Naive thymus-derived CD8-positive, alpha-beta T cell (primary cell): ENCODE measurements at regions of chr17 and their contacts with region 1.

Region 1: DNA sequence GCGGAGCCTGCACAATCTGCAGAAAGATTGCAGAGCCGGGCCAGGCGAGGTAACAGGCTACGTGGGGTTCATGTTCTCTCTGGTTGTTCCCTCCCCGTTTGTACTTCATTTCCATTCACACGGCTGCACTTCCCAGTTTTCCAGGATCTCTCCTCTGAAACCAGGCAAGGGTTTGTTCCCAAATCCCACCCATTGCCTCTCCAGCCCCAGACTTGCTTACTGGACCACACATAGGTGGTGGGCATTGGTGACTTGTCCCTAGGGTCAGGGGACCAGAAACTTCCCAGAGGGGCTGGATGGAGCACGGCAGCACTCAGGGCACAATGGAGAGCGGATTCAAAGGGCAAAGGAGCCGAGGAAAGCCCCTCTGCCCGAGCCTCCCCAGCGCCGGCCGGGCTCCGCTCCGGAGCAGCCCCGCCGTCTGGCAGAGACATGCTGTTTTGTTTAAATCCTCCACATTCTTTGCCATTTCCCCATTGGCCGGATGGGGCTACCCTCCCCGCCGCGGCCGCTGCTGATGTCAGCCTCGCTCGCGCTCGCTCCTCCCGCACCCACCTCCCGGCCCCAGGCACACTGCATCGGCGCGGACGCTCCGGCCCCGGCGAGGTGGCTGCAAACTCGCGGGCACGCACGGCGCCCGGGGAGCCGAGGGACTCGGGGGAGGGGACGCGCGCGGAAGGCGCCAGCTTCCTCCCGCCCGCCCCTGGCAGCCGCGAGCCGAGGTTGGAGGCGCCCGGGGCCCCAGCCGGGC is at the start of gene PITPNC1:
- DNase-seq: peak; percentile 81 to 93 (median 86)
- ATAC-seq: peak; percentile 70 to 74
- H3K4me3 Mint-ChIP-seq: peak within 1 kb of the TSS; percentile 89 to 99 (median 94)
- H3K27ac Mint-ChIP-seq: peak within 1 kb of the TSS; percentile 45 to 97 (median 94)
- H3K4me1 Mint-ChIP-seq: peaks cover 24 to 47% (median 44%) of the 10 kb centered on the region in 4 donors
- H3K27me3 Mint-ChIP-seq: no peaks in the 10 kb centered on the region
- polyA plus RNA-seq, gene PITPNC1: 119 to 159 (median 125) TPM

Region 2: DNA sequence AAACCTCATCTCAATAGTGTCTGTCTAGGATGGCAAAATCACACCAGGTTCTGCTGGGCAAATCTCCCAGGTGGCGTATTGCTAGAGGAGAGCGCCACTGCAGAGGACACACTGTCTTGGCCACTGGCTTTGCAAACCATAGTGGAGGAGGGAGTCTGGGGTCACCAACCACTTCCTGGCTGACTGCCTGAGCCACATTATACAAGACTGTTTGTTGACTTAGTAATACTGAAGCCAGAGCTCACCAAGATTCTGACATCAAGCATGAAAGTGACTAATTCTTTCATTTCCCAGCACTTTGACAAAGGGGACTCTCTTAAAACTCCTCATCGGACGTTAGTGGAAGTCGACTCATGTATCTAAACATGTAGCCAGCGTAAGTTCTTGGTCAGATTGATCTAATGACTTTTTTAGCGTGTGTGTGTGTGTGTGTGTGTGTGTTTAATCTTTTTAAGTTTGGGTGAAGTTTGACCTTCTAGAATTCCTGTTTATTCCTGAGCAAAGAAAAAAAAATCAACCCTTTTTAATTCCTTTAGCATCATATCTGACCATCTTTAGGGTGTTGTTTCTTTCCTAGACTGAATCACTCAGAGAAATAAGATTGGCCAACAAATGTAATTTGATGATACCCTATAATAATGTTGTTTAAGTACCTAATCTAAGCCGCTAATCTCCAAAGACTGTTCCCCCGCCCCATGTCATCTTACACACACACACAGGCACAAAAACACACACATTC is 13.9 kb after region 1 on chr17:
- POLR2A ChIA-PET with region 1: interaction called, 61 read pairs
- DNase-seq: peak; percentile 32 to 76 (median 54)
- ATAC-seq: peak; percentile 80 to 83
- H3K4me3 Mint-ChIP-seq: peak overlapping the region; percentile 59 to 88 (median 80)
- H3K27ac Mint-ChIP-seq: peak overlapping the region; percentile 90 to 98 (median 94)
- H3K4me1 Mint-ChIP-seq: peaks cover 30 to 90% (median 77%) of the 10 kb centered on the region in 4 donors
- H3K27me3 Mint-ChIP-seq: no peaks in the 10 kb centered on the region

Region 3: GRCh38 chr17:67421869-67422273 is 45.0 kb after region 1 on chr17:
- POLR2A ChIA-PET with region 1: interaction called, 23 read pairs
- DNase-seq: peak in 9 of 10 donors; percentile 52 to 85 (median 71)
- ATAC-seq: peak; percentile 91 to 98
- H3K4me3 Mint-ChIP-seq: peak overlapping the region; percentile 43 to 76 (median 64)
- H3K27ac Mint-ChIP-seq: peak overlapping the region; percentile 94 to 99 (median 98)
- H3K4me1 Mint-ChIP-seq: peaks cover 34 to 95% (median 89%) of the 10 kb centered on the region in 4 donors
- H3K27me3 Mint-ChIP-seq: no peaks in the 10 kb centered on the region

Region 4: GRCh38 chr17:67441052-67441927 is 64.4 kb after region 1 on chr17:
- POLR2A ChIA-PET with region 1: interaction called, 118 read pairs
- DNase-seq: peak; percentile 47 to 89 (median 77)
- ATAC-seq: peak; percentile 87 to 93
- H3K4me3 Mint-ChIP-seq: peak overlapping the region; percentile 72 to 91 (median 83)
- H3K27ac Mint-ChIP-seq: peak overlapping the region; percentile 95 to 100 (median 99)
- H3K4me1 Mint-ChIP-seq: peaks cover 48 to 93% (median 89%) of the 10 kb centered on the region in 4 donors
- H3K27me3 Mint-ChIP-seq: no peaks in the 10 kb centered on the region

Region 5: GRCh38 chr17:67469208-67469895 is 92.4 kb after region 1 on chr17:
- POLR2A ChIA-PET with region 1: interaction called, 240 read pairs
- DNase-seq: peak in 8 of 10 donors; percentile 26 to 77 (median 43)
- ATAC-seq: peak; percentile 82 to 85
- H3K4me3 Mint-ChIP-seq: peak overlapping the region; percentile 72 to 92 (median 84)
- H3K27ac Mint-ChIP-seq: peak overlapping the region; percentile 87 to 100 (median 96)
- H3K4me1 Mint-ChIP-seq: peaks cover 38 to 80% (median 73%) of the 10 kb centered on the region in 4 donors
- H3K27me3 Mint-ChIP-seq: no peaks in the 10 kb centered on the region

Region 6: GRCh38 chr17:67481808-67482207 is 104.9 kb after region 1 on chr17:
- POLR2A ChIA-PET with region 1: interaction called, 240 read pairs
- DNase-seq: no peak
- ATAC-seq: no peak
- H3K4me3 Mint-ChIP-seq: peak overlapping the region in 4 of 10 donors; percentile 8 to 56 (median 39)
- H3K27ac Mint-ChIP-seq: peak overlapping the region in 8 of 10 donors; percentile 15 to 86 (median 54)
- H3K4me1 Mint-ChIP-seq: peaks cover 49 to 91% (median 78%) of the 10 kb centered on the region in 4 donors
- H3K27me3 Mint-ChIP-seq: no peaks in the 10 kb centered on the region